ENCODE measurements at regions of chr1 and their contacts with region 1.

Region 1: DNA sequence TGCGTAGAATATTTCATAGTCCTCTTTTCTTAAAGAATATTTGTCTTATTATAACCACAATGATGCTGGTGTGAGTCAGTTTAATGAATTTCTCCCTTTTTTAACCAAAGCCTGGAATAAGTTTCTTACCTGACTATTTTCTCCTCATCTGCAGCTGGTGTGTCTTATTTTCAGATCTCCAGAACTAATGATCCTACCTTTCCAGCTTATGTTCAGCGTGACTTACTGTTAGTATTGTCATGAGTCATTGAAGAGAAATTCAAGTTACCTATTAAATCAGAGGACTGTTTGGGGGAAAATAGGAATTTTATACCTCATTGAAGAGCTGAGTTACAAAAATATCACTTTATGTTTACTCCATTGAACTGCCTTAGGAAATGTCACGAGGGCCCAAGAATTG is 482.1 kb downstream of the RWDD3 start:
- DNase-seq: no peak
- ATAC-seq: no peak
- H3K4me3 ChIP-seq: no peak overlapping the region
- H3K4me3 Mint-ChIP-seq: no peak overlapping the region
- H3K27ac ChIP-seq: no peak overlapping the region
- H3K27ac Mint-ChIP-seq: no peak overlapping the region
- H3K4me1 ChIP-seq: no peaks in the 10 kb centered on the region
- H3K4me1 Mint-ChIP-seq: no peaks in the 10 kb centered on the region
- H3K27me3 ChIP-seq: no peaks in the 10 kb centered on the region
- H3K27me3 Mint-ChIP-seq: no peaks in the 10 kb centered on the region
- CTCF ChIP-seq: no peak

Region 2: DNA sequence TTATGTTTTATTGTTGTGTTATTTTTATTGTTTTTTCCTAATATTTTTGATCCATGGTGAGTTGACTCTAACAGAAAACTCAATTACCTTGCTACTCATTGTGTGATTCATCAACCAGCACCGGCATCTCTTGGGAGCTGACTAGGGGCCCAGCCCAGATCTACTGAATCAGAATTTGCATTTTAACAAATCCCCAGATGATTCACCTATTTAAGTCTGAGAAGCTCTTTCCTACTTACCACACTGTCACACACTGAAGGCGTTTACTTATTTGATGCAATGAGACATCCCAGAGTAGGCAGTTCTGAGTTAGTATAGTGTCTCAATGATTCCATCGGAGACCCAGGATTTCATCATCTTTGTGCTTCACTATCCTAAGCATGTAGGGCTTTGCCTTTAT is 65.5 kb before region 1 on chr1:
- CTCF ChIA-PET with region 1: no interaction called
- POLR2A ChIA-PET with region 1: no interaction called
- intact Hi-C with region 1: loop called in 1 of 2 experiments (anchors 10 kb)
- DNase-seq: no peak
- ATAC-seq: no peak
- H3K4me3 ChIP-seq: no peak overlapping the region
- H3K4me3 Mint-ChIP-seq: no peak overlapping the region
- H3K27ac ChIP-seq: no peak overlapping the region
- H3K27ac Mint-ChIP-seq: no peak overlapping the region
- H3K4me1 ChIP-seq: no peaks in the 10 kb centered on the region
- H3K4me1 Mint-ChIP-seq: no peaks in the 10 kb centered on the region
- H3K27me3 ChIP-seq: no peaks in the 10 kb centered on the region
- H3K27me3 Mint-ChIP-seq: no peaks in the 10 kb centered on the region
- CTCF ChIP-seq: no peak

Region 3: DNA sequence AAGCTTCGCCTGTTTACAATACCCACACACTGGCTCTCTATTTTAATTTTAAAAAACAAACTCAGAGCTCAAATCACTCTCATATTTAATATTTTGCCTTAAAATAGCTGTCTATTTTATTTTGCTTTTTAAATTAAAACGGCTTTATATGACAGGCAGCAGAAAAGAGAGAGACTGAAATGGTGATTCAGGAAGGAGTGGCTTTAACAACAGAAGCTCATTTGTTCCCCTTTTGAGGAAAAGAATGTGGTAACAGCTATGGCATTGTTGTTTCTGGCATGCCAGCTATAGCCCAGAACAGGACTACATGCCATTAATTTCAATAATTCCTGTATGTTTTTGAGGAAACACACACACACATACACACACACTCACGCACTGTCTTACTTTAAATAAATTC is 771.3 kb after region 1 on chr1:
- CTCF ChIA-PET with region 1: no interaction called
- POLR2A ChIA-PET with region 1: no interaction called
- intact Hi-C with region 1: no loop called
- DNase-seq: no peak
- ATAC-seq: no peak
- H3K4me3 ChIP-seq: no peak overlapping the region
- H3K4me3 Mint-ChIP-seq: no peak overlapping the region
- H3K27ac ChIP-seq: no peak overlapping the region
- H3K27ac Mint-ChIP-seq: no peak overlapping the region
- H3K4me1 ChIP-seq: no peaks in the 10 kb centered on the region
- H3K4me1 Mint-ChIP-seq: no peaks in the 10 kb centered on the region
- H3K27me3 ChIP-seq: no peaks in the 10 kb centered on the region
- H3K27me3 Mint-ChIP-seq: no peaks in the 10 kb centered on the region
- CTCF ChIP-seq: no peak